H1 (cell line): ENCODE measurements at regions of chr15 and their contacts with region 1.

Region 1: GRCh38 chr15:92808978-92809879 is 90.9 kb upstream of the CHD2 start:
- DNase-seq: peak; percentile 97 to 99
- H3K4me3 ChIP-seq: peak overlapping the region; percentile 45 to 75 (median 63)
- H3K27ac ChIP-seq: peak overlapping the region; percentile 99
- H3K4me1 ChIP-seq: peaks cover 11 to 16% (median 12%) of the 10 kb centered on the region in 4 experiments; a peak in 6 of 7 replicates
- H3K27me3 ChIP-seq: no peaks in the 10 kb centered on the region
- CTCF ChIP-seq: peak; percentile 84 to 93 (median 92)
- EP300 ChIP-seq: peak in 1 of 2 experiments; percentile 93; a peak in 2 of 3 replicates
- POLR2A ChIP-seq: peak in 1 of 2 experiments; percentile 96; a peak in 2 of 3 replicates
- RAD21 ChIP-seq: peak; percentile 71 to 81

Region 2: GRCh38 chr15:92683232-92683834 is 125.9 kb before region 1 on chr15:
- CTCF ChIA-PET with region 1: no interaction called
- POLR2A ChIA-PET with region 1: no interaction called
- DNase-seq: peak; percentile 25 to 59
- H3K4me3 ChIP-seq: no peak overlapping the region
- H3K27ac ChIP-seq: no peak overlapping the region
- H3K4me1 ChIP-seq: no peaks in the 10 kb centered on the region
- H3K27me3 ChIP-seq: no peaks in the 10 kb centered on the region
- CTCF ChIP-seq: peak; percentile 75 to 83 (median 76)
- EP300 ChIP-seq: no peak
- POLR2A ChIP-seq: no peak
- RAD21 ChIP-seq: peak; percentile 92 to 94

Region 3: DNA sequence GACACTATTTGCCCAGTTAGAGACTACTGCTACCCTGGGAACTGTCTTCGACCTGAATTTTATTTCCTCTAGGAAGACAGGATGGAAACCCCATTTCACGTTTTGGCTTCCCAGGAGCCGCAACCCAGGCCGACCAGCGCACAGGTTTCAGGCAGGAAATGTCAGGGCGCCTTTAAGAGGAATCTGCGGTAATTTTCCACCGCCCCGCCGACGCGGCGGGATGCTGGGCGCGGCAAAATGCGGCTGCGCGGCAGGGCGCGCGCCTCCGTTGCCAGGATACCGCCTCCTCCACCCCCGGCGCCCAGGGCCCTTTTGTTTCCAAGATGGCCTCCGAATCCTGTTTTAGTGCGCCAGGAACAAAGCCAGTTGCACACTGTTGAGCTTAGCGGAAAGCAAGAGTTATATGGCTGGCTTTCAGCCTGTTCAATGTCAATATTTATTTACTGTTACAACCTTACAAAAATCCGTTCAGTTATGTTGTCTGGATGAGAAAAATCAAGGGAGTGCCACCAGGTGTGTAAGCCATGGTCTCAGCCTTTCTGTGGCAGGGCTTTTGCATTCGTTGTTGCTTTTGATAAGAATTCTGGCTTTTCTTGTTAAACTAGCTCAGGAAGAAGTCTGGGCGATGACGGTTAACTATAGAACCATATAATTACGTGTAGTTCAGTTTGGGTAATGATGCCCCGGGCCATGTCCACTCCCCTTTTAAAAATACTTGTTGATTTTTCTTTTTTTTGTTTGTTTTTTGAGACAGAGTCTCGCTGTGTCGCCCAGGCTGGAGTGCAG is 11.2 kb after region 1 on chr15:
- CTCF ChIA-PET with region 1: interaction called, 16 read pairs
- POLR2A ChIA-PET with region 1: interaction called, 82 read pairs
- DNase-seq: peak; percentile 70 to 94
- H3K4me3 ChIP-seq: peak overlapping the region; percentile 13 to 49 (median 34); a peak in 5 of 8 replicates
- H3K27ac ChIP-seq: peak overlapping the region; percentile 84
- H3K4me1 ChIP-seq: peaks cover 15 to 44% (median 39%) of the 10 kb centered on the region in 4 experiments; a peak in 6 of 7 replicates
- H3K27me3 ChIP-seq: peaks cover 0 to 2% (median 0%) of the 10 kb centered on the region in 4 experiments; a peak in 1 of 7 replicates
- CTCF ChIP-seq: no peak
- EP300 ChIP-seq: peak in 1 of 2 experiments; percentile 87; a peak in 2 of 3 replicates
- POLR2A ChIP-seq: peak in 1 of 2 experiments; percentile 77; a peak in 2 of 3 replicates
- RAD21 ChIP-seq: no peak

Region 4: GRCh38 chr15:92831655-92832328 is 22.6 kb after region 1 on chr15:
- CTCF ChIA-PET with region 1: interaction called, 14 read pairs
- POLR2A ChIA-PET with region 1: interaction called, 46 read pairs
- DNase-seq: peak; percentile 80 to 90
- H3K4me3 ChIP-seq: peak overlapping the region in 1 of 4 experiments; percentile 41; a peak in 1 of 8 replicates
- H3K27ac ChIP-seq: peak overlapping the region; percentile 73
- H3K4me1 ChIP-seq: peaks cover 3 to 15% (median 11%) of the 10 kb centered on the region in 4 experiments; a peak in 6 of 7 replicates
- H3K27me3 ChIP-seq: no peaks in the 10 kb centered on the region
- CTCF ChIP-seq: no peak
- EP300 ChIP-seq: peak in 1 of 2 experiments; percentile 62; a peak in 1 of 3 replicates
- POLR2A ChIP-seq: peak; percentile 67 to 90
- RAD21 ChIP-seq: peak; percentile 36 to 42

Region 5: GRCh38 chr15:92891533-92892200 is 82.4 kb after region 1 on chr15:
- CTCF ChIA-PET with region 1: interaction called, 3 read pairs
- POLR2A ChIA-PET with region 1: interaction called, 226 read pairs
- DNase-seq: no peak
- H3K4me3 ChIP-seq: no peak overlapping the region
- H3K27ac ChIP-seq: no peak overlapping the region
- H3K4me1 ChIP-seq: no peaks in the 10 kb centered on the region; a peak in 1 of 7 replicates
- H3K27me3 ChIP-seq: no peaks in the 10 kb centered on the region
- CTCF ChIP-seq: no peak
- EP300 ChIP-seq: no peak
- POLR2A ChIP-seq: peak in 1 of 2 experiments; percentile 26; a peak in 1 of 3 replicates
- RAD21 ChIP-seq: no peak

Region 6: GRCh38 chr15:92903941-92904831 is 95.0 kb after region 1 on chr15:
- CTCF ChIA-PET with region 1: interaction called, 10 read pairs
- POLR2A ChIA-PET with region 1: interaction called, 97 read pairs
- DNase-seq: peak; percentile 98 to 99
- H3K4me3 ChIP-seq: peak overlapping the region; percentile 50 to 97 (median 88)
- H3K27ac ChIP-seq: peak overlapping the region; percentile 98
- H3K4me1 ChIP-seq: peaks cover 0 to 16% (median 4%) of the 10 kb centered on the region in 4 experiments; a peak in 5 of 7 replicates
- H3K27me3 ChIP-seq: no peaks in the 10 kb centered on the region
- CTCF ChIP-seq: no peak
- EP300 ChIP-seq: peak; percentile 10 to 38; a peak in 2 of 3 replicates
- POLR2A ChIP-seq: peak; percentile 98 to 99
- RAD21 ChIP-seq: no peak

Region 7: DNA sequence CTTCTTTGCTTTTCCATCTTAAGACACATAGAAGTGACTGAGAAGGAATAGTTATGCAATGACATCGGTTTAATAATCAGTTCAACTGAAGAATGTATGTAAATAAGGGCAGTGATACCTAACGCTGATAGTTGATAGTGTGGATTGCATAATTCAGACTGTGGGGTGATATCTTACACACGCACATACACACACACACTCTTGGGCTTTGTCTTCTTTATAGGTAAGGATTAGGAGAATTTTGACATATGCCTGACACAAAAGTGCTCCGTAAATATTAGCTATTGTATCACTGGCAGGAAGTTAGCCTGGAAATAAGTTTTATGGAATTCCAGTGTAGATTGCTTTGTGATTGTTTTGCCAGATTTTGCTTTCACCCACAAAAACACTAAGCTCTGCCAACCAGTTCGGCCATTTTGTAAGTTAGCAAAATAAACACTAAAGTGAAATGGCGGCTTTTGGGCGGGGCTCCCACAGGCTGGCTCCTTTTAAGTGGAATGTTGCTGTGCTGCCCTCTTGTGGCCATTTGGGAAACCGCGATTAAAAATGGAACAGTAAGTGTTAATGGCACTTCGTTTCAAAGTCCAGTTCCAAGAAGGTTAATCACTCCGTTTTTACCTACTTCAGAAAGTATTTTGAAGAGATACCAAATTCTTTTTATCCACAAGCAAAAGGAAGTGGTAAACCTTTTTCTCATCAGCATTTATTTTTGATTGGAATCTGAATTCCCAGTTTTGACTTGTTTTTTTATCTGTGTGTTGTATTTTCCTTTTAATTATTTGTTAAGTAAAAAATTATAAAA is 108.6 kb after region 1 on chr15:
- CTCF ChIA-PET with region 1: interaction called, 23 read pairs
- POLR2A ChIA-PET with region 1: interaction called, 45 read pairs
- DNase-seq: peak; percentile 80 to 96
- H3K4me3 ChIP-seq: no peak overlapping the region
- H3K27ac ChIP-seq: peak overlapping the region; percentile 67
- H3K4me1 ChIP-seq: peaks cover 0 to 14% (median 8%) of the 10 kb centered on the region in 4 experiments; a peak in 5 of 7 replicates
- H3K27me3 ChIP-seq: no peaks in the 10 kb centered on the region
- CTCF ChIP-seq: peak; percentile 44 to 82 (median 81)
- EP300 ChIP-seq: peak in 1 of 2 experiments; percentile 54; a peak in 1 of 3 replicates
- POLR2A ChIP-seq: no peak
- RAD21 ChIP-seq: peak; percentile 81 to 87